SK-N-SH (cell line): ENCODE measurements at regions of chr19 and their contacts with region 1.

Region 1: GRCh38 chr19:33778089-33778791 is 18.4 kb upstream of the KCTD15 start:
- DNase-seq: peak; percentile 98
- H3K4me3 ChIP-seq: peak overlapping the region in 1 of 2 experiments; percentile 53; a peak in 2 of 4 replicates
- H3K27ac ChIP-seq: no peak overlapping the region
- H3K4me1 ChIP-seq: peaks cover 0 to 21% of the 10 kb centered on the region in 2 experiments; a peak in 1 of 4 replicates
- H3K27me3 ChIP-seq: no peaks in the 10 kb centered on the region; the same call in 1 of the 2 replicates
- CTCF ChIP-seq: peak; percentile 97
- EP300 ChIP-seq: no peak
- RAD21 ChIP-seq: peak; percentile 99

Region 2: DNA sequence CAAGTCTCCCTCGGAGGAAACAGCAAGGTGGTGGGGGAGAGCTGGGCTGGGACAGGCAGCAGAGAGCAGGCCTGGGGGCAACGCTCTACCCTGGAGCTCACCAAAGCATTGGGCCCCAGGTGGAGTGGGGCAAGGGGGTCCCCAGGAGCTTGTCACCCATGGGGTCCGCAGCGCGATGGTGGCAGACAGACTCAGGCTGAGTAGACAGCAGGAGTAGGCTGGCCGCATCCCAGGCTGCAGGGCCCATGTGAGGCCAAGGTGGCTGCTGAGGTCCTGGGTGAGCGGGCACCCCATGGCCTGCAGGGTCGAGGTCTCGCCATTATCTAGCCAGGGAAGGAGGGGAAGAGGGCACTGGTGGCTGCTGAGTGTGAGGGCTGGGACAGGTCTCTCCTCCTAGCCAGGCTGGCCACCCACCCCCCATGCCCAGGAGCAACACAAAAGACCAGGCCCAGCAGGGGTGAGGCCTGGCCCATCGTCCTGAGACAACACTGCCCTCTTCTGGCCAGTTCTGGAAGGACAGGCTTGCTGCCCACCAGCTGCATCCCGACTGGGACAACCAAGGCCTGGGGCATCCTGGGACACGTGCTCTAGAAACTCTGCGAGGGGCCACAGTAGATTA is 371.6 kb before region 1 on chr19:
- CTCF ChIA-PET with region 1: interaction called, 28 read pairs
- POLR2A ChIA-PET with region 1: no interaction called
- DNase-seq: peak; percentile 94
- H3K4me3 ChIP-seq: no peak overlapping the region
- H3K27ac ChIP-seq: no peak overlapping the region; a peak in 1 of 4 replicates
- H3K4me1 ChIP-seq: peaks cover 0 to 28% of the 10 kb centered on the region in 2 experiments; a peak in 1 of 4 replicates
- H3K27me3 ChIP-seq: no peaks in the 10 kb centered on the region
- CTCF ChIP-seq: peak; percentile 83
- EP300 ChIP-seq: no peak
- RAD21 ChIP-seq: peak; percentile 91

Region 3: DNA sequence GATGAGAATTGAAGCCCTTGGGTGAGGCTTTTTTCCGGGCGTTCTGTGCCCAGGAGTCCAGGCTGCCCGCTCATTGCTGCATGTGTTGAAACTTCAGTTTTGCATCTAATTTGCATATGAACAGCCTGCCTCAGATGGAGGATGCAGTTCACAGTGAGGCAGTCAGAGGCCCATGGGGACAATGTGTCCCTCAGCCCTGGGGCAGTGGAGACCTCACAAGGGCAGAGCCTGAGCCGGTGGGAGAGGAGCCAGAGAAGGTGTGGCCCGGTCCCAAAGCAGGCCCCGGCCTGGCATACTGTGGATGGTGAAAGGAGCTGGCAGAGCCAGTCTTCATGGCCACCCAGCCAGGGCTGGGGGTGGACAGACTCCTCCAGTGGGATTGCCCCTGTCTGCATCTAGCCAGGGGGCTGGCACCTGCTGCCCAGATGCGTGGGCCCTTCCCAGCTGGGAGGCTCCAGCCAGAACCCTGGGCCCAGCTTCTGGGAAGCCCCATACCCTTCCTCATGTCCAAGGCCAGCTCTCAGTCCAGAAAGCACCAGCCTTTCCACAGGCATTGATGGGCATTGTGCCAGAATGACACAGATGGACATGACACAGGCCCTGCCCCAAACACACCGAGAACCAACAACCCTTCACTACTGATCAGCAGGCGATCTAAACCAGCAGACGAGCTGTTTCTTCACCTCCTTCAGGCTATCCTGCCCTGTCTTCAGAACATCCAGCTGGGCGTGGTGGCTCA is 14.4 kb before region 1 on chr19:
- CTCF ChIA-PET with region 1: interaction called, 38 read pairs
- POLR2A ChIA-PET with region 1: no interaction called
- DNase-seq: peak; percentile 91
- H3K4me3 ChIP-seq: no peak overlapping the region
- H3K27ac ChIP-seq: peak overlapping the region in 1 of 2 experiments; percentile 76; a peak in 2 of 4 replicates
- H3K4me1 ChIP-seq: peaks cover 0 to 27% of the 10 kb centered on the region in 2 experiments; a peak in 1 of 4 replicates
- H3K27me3 ChIP-seq: no peaks in the 10 kb centered on the region
- CTCF ChIP-seq: no peak
- EP300 ChIP-seq: peak in 1 of 2 experiments; percentile 87; a peak in 2 of 4 replicates
- RAD21 ChIP-seq: peak; percentile 40

Region 4: DNA sequence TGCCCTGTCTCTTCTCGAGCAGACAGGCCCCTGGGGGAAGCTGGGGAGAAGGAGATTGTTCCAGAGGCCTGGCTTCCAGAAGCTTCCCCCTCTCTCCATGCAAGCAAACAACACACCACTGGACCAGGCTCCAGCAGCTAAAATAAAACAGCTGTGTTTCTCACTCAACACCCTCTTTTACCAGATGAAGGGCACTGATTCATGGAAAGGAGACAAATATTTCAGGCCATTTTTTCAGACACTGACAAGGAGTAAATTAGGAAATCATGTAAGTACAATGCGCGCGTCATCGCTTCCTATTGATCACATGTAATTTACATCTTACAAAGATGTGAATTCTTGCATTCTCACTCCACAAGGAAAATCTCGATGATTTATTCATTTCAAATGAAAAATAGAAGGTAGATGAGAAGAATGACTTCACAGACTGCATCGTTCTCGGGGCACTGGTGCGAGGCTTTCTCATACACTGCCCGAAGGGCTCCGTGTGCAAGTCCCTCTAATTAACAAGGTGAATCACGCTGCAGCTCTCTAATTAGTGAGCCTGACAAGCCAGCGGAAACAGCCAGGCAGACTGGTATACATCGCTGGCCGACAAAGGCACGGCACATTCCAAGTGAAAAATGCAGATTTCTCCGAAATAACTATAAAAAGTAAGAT is 172.0 kb after region 1 on chr19:
- CTCF ChIA-PET with region 1: interaction called, 14 read pairs
- POLR2A ChIA-PET with region 1: no interaction called
- DNase-seq: peak; percentile 48
- H3K4me3 ChIP-seq: no peak overlapping the region
- H3K27ac ChIP-seq: peak overlapping the region in 1 of 2 experiments; percentile 24; a peak in 1 of 4 replicates
- H3K4me1 ChIP-seq: peaks cover 0 to 5% of the 10 kb centered on the region in 2 experiments; a peak in 1 of 4 replicates
- H3K27me3 ChIP-seq: no peaks in the 10 kb centered on the region
- CTCF ChIP-seq: no peak
- EP300 ChIP-seq: peak in 1 of 2 experiments; percentile 35; a peak in 1 of 4 replicates
- RAD21 ChIP-seq: 0 out of 2 replicates have a peak, but pooled peaks have one; percentile 3

Region 5: DNA sequence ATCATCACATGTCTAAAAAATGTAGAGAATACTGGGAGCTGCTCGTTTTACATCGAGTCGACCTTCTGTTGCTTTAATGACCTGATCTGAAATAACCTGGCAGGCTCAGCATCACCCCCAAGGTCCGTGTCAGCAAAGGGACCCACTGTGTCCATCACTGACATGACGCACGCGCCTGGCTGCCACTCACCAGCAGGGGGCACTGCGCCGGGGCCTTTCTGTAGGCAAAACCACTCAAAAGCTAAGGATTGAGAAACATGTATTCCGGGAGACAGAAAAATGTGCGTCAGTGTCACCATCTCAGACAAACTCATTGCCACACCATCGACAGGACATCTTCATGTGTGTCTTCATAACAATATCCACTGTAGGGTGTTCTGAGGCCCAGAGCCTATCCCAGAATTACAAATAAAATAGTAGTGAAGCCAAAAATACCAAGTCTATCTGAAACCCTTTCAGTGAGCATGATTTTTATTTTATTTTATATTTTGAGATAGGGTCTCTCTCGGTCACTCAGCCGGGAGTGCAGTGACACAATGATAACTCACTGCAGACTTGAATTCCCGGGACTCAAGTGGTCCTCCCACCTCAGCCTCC is 263.8 kb after region 1 on chr19:
- CTCF ChIA-PET with region 1: interaction called, 42 read pairs
- POLR2A ChIA-PET with region 1: no interaction called
- DNase-seq: peak; percentile 71
- H3K4me3 ChIP-seq: no peak overlapping the region; a peak in 1 of 4 replicates
- H3K27ac ChIP-seq: no peak overlapping the region
- H3K4me1 ChIP-seq: no peaks in the 10 kb centered on the region
- H3K27me3 ChIP-seq: no peaks in the 10 kb centered on the region
- CTCF ChIP-seq: peak; percentile 85
- EP300 ChIP-seq: no peak
- RAD21 ChIP-seq: peak; percentile 58

Region 6: DNA sequence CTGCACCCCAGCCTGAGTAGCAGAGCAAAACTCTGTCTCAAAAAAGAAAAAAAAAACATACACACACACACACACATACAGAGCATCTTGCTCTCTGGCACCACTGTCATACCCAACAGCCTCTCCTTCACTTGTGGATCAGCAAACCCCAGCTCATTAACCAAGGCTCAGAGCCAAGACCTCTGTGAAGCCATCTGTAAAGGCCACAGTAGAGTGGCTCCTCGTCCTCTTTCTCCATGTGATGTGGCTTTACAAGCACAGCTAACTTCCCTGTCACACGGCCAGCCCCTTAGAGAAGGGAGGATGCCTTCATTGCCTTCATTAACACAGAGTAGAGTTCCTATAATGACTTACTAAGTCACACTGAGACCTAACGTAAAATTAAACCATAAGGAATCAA is 331.4 kb after region 1 on chr19:
- CTCF ChIA-PET with region 1: interaction called, 127 read pairs
- POLR2A ChIA-PET with region 1: no interaction called
- DNase-seq: no peak
- H3K4me3 ChIP-seq: no peak overlapping the region
- H3K27ac ChIP-seq: no peak overlapping the region
- H3K4me1 ChIP-seq: no peaks in the 10 kb centered on the region
- H3K27me3 ChIP-seq: no peaks in the 10 kb centered on the region
- CTCF ChIP-seq: no peak
- EP300 ChIP-seq: no peak
- RAD21 ChIP-seq: no peak